Vagina (tissue), 2 donors: ENCODE measurements at regions of chr3 and their contacts with region 1.

Region 1: GRCh38 chr3:184135149-184135910 is at the start of gene EIF2B5:
- DNase-seq: peak in 1 of 2 donors; percentile 91
- H3K4me3 ChIP-seq: peak within 1 kb of the TSS; percentile 80 to 89
- H3K27ac ChIP-seq: peak within 1 kb of the TSS; percentile 91
- H3K4me1 ChIP-seq: peaks cover 31% of the 10 kb centered on the region
- H3K27me3 ChIP-seq: no peaks in the 10 kb centered on the region
- CTCF ChIP-seq: peak in 2 of 3 experiments; percentile 14 to 42
- POLR2A ChIP-seq: peak in 1 of 2 donors; percentile 37
- total RNA-seq, gene EIF2B5: 30.2 TPM

Region 2: GRCh38 chr3:184185461-184186308 is 50.4 kb after region 1 on chr3 and contains the start of gene ABCF3:
- intact Hi-C with region 1: loop called (anchors 5 kb)
- DNase-seq: peak; percentile 99 to 100
- H3K4me3 ChIP-seq: peak within 1 kb of the TSS; percentile 97 to 98
- H3K27ac ChIP-seq: peak within 1 kb of the TSS; percentile 74
- H3K4me1 ChIP-seq: peaks cover 33% of the 10 kb centered on the region
- H3K27me3 ChIP-seq: no peaks in the 10 kb centered on the region
- CTCF ChIP-seq: no peak
- POLR2A ChIP-seq: peak in 1 of 2 donors; percentile 72
- total RNA-seq, gene ABCF3: 94.0 TPM

Region 3: DNA sequence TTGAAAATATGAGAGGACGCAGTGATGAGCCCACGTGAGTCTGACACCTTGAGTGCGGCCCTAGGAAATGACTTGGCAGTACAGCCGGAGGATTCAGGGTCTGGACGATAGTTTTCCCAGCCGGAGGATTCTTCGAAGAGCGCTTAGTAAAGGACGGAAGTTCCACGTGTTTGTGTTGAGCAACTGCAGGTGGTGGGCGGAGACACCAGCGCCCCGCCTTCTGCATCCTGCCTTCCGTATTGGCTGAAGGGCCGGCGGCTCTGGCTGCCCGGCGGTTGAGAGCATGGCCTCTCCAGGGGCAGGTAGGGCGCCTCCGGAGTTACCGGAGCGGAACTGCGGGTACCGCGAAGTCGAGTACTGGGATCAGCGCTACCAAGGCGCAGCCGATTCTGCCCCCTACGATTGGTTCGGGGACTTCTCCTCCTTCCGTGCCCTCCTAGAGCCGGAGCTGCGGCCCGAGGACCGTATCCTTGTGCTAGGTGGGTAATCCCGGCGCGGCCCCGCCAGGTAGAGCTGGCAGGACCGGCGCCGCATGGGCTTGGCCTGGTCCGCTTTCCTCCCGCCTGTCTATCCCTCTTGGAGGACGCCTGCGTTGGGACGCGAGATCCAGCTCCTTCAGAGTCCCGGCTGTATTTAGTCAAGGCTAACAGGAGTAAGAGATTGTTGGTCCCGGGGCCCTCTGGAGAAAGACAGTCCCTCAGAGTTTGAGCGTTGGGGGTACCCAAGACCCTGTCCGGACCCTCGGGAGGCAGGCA is 114.3 kb after region 1 on chr3 and contains the start of gene EEF1AKMT4:
- intact Hi-C with region 1: loop called (anchors 2 kb)
- DNase-seq: peak; percentile 95 to 97
- H3K4me3 ChIP-seq: peak within 1 kb of the TSS; percentile 71 to 87
- H3K27ac ChIP-seq: peak within 1 kb of the TSS; percentile 79
- H3K4me1 ChIP-seq: peaks cover 28% of the 10 kb centered on the region
- H3K27me3 ChIP-seq: no peaks in the 10 kb centered on the region
- CTCF ChIP-seq: peak in 1 of 3 experiments; percentile 13
- POLR2A ChIP-seq: no peak
- total RNA-seq, gene EEF1AKMT4: 5.6 TPM